ENCODE measurements at regions of chr7 and their contacts with region 1.

Region 1: DNA sequence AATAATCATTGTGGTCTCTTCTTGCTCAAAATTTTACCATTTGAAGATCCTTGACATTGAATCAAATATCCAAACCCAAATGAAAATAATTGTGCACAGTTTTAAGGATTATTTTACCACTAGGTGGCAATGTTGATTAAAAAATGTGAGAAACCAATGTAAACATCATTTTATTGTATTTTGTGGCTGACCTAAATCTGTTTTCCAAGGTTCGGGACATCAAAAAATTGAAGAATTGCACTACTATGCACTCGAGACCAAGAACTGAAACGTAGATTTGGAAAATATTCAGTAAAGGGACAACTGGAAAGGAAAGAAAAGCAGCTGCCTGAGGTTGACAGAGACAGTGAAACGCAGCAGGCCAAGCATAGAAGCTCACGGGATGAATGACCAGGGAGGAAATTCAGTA is 259.3 kb downstream of the SNX13 start:
- DNase-seq: no peak
- H3K4me3 Mint-ChIP-seq: no peak overlapping the region
- H3K27ac Mint-ChIP-seq: no peak overlapping the region
- H3K4me1 Mint-ChIP-seq: no peaks in the 10 kb centered on the region
- H3K27me3 Mint-ChIP-seq: peaks cover 5% of the 10 kb centered on the region

Region 2: GRCh38 chr7:17976952-17977351 is 296.0 kb after region 1 on chr7:
- intact Hi-C with region 1: no loop called
- DNase-seq: no peak
- H3K4me3 Mint-ChIP-seq: no peak overlapping the region
- H3K27ac Mint-ChIP-seq: no peak overlapping the region
- H3K4me1 Mint-ChIP-seq: no peaks in the 10 kb centered on the region
- H3K27me3 Mint-ChIP-seq: peaks cover 2% of the 10 kb centered on the region

Region 3: DNA sequence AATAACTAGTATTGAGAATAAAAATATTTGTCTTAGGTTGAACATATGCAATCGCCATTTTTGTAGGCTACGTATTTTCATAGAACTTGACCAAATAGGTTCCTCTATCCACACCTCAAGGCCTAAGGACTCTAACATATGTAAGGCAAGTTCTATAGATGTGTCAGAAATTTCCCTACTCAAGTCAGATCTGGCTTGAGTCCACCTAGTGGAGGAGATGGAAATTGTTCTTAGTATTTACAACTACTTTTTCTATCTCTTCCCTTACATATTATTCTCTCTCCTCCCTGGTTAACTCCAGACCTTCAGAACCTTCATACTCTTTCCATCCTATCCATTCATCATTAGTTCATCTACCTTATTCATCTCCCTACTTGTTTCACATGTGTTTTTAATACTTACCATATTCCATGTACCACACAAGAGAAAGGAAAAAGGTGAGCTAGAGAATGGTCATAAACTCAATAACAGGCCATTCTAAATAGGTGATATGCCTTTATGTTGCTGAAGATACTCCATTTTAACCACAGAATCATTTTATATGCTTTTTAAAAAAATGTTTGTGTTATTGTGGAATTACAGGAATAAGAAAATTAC is 640.1 kb after region 1 on chr7:
- intact Hi-C with region 1: loop called (anchors 1 kb)
- DNase-seq: no peak
- H3K4me3 Mint-ChIP-seq: no peak overlapping the region
- H3K27ac Mint-ChIP-seq: no peak overlapping the region
- H3K4me1 Mint-ChIP-seq: no peaks in the 10 kb centered on the region
- H3K27me3 Mint-ChIP-seq: no peaks in the 10 kb centered on the region

Region 4: DNA sequence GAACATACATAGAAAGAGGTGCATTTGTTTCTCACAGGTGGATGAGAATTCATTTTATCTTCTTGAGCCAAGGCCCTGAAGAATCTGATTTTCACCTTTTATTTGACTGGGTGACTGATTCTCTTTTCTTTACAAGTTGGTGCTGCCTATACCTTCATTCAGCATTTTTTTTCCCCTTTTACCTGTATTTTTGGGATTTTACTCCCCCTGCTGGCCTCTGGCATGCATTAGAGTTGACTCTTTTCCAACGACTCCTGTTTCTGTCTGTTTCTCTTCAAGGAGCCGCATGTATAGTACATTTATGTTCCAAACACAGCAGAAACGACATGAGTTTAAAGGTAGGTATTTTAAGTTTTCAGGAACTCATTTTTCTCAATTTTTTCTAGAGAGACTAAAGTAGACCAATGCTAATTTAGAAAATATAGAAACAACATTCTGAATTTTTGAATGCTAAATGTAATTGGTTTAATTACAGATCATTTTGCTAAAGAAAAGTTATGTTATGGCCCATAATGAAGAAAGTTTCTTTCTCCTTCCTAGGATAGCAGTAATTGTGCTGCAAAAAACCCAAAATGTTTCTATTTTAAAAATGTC is 664.8 kb after region 1 on chr7:
- intact Hi-C with region 1: loop called (anchors 1 kb)
- DNase-seq: no peak
- H3K4me3 Mint-ChIP-seq: no peak overlapping the region
- H3K27ac Mint-ChIP-seq: no peak overlapping the region
- H3K4me1 Mint-ChIP-seq: no peaks in the 10 kb centered on the region
- H3K27me3 Mint-ChIP-seq: peaks cover 3% of the 10 kb centered on the region

Measured in activated T-helper 2 cell treated with anti-CD3 and anti-CD28 coated beads, Interferon-gamma antibody, Interleukin-2, Interleukin-4, amounts not matched to agents 10 μg/mL and 5 μg/mL and 100 μg/mL, durations not matched to agents 14 hours and 24 hours and 36 hours (primary cell).